Right cardiac atrium (tissue), 5 donors: ENCODE measurements at regions of chr1 and their contacts with region 1.

Region 1: GRCh38 chr1:114581335-114582287 is at the start of gene BCAS2:
- DNase-seq: peak; percentile 97 to 98 (median 97)
- ATAC-seq: peak; percentile 99
- H3K4me3 ChIP-seq: peak within 1 kb of the TSS; percentile 100
- H3K27ac ChIP-seq: peak within 1 kb of the TSS; percentile 99
- H3K4me1 ChIP-seq: no peaks in the 10 kb centered on the region
- H3K27me3 ChIP-seq: no peaks in the 10 kb centered on the region
- total RNA-seq, gene BCAS2: 33.0 to 36.0 (median 33.8) TPM

Region 2: DNA sequence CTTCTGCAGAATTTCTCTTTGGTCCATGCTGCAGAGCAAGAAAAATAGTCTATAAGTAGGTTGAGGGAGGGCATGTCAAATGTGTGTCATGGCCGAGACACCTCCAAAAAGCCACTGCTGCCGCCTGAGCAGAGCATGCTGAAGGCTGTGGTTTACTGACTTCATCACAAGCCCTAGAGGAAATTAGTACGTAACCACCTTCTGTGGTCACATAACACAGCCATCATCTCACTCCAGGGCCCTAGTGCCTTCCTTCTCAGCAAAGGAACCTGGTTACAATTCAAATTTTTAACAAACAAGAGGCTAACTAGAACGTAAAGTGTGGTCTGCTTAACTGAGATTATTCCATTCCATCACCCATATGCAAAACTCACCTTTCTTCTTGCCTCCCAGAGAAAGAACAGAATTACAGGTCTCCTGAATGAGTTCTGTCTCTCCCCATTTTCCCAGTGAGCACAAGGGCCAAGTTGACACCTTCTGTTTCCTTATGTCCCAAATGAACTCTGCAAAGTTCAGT is 710.0 kb before region 1 on chr1 and contains the start of gene PTPN22:
- intact Hi-C with region 1: loop called in 1 of 4 experiments (anchors 5 kb)
- DNase-seq: peak; percentile 37 to 60 (median 53)
- ATAC-seq: peak; percentile 74 to 77
- H3K4me3 ChIP-seq: no peak within 1 kb of the TSS
- H3K27ac ChIP-seq: no peak within 1 kb of the TSS
- H3K4me1 ChIP-seq: peaks cover 1% of the 10 kb centered on the region
- H3K27me3 ChIP-seq: no peaks in the 10 kb centered on the region
- total RNA-seq, gene PTPN22: 1.1 to 1.6 (median 1.4) TPM